Body of pancreas (tissue), 4 donors: ENCODE measurements at regions of chr2 and their contacts with region 1.

Region 1: GRCh38 chr2:207746131-207746530 is 23.6 kb downstream of the FZD5 start:
- DNase-seq: peak; percentile 56 to 70 (median 66)
- ATAC-seq: peak; percentile 78
- H3K4me3 ChIP-seq: no peak overlapping the region
- H3K27ac ChIP-seq: no peak overlapping the region
- H3K4me1 ChIP-seq: peaks cover 47% of the 10 kb centered on the region
- H3K27me3 ChIP-seq: no peaks in the 10 kb centered on the region
- CTCF ChIP-seq: peak; percentile 55 to 94 (median 88)
- POLR2A ChIP-seq: no peak

Region 2: DNA sequence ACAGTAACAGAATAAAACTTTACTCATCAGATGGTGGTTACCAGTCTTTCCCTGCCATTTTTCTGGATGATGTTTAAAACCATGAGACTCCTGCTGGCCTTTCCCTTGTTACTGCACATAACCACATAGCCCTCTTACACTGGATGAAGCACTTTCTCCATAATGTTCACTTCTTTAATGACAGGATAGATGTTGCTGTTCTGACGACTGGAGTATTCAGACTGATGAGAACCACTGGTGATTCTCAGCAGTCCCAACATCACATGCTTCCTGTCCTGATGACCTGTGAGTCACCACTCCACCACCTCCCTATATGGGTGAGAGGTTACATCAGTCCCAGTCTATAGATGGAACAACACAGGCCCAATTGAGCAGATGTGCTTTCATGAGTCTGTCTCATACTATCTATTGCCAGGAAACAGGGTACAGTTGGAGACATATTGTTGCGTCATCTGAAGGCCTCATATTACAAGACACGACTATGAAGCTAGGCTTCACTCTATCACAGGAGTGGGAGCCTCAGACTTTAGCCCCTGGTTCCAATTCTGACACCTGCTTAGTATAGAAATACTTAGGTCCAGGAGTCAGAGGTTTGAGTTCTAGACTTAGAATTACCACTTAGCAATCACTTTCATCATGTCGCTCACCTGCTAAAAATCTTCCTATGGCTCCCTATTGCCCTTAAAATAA is 434.7 kb before region 1 on chr2:
- intact Hi-C with region 1: no loop called
- DNase-seq: peak in 3 of 4 donors; percentile 9 to 72 (median 19)
- ATAC-seq: peak; percentile 55
- H3K4me3 ChIP-seq: no peak overlapping the region
- H3K27ac ChIP-seq: peak overlapping the region in 1 of 4 donors; percentile 45
- H3K4me1 ChIP-seq: no peaks in the 10 kb centered on the region
- H3K27me3 ChIP-seq: no peaks in the 10 kb centered on the region
- CTCF ChIP-seq: peak in 1 of 7 experiments; percentile 22
- POLR2A ChIP-seq: peak in 1 of 3 donors; percentile 24

Region 3: DNA sequence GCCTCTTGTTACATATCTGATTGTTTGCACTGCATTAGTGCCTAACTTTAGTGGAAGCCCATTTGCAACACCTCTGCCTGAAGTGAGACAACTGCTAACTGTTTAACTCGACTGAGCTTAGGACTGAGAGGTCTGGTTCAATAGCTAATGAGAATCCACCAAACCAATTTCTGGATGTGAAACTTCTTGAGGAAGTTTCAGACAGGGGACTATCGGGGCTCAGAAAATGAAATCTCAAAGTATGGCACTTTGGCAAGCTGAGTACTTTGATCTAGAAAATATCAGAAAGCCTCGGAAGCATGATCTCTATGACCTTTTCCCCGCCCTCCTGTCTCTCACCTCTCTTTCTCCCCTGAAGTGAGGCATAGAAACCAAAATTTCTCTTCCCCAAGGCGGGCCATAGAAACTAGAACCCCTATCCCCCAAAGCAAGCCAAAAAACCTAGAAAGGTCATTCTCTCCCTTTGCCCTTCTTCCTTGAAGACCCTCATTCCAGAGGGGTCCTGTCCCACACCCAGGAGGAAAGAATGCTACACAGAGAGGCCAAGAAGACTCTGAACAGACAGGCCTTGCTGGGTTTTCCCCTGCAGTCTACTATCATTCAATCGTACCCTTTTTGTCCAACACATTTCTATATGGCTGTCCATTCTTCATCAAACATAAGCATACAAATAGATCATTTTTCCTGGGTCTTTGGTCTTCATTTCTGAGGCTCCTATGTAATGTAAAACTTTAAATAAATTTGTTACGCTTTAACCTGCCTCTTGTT is 286.0 kb before region 1 on chr2:
- intact Hi-C with region 1: no loop called
- DNase-seq: no peak
- ATAC-seq: no peak
- H3K4me3 ChIP-seq: no peak overlapping the region
- H3K27ac ChIP-seq: no peak overlapping the region
- H3K4me1 ChIP-seq: no peaks in the 10 kb centered on the region
- H3K27me3 ChIP-seq: no peaks in the 10 kb centered on the region
- CTCF ChIP-seq: no peak
- POLR2A ChIP-seq: no peak

Region 4: DNA sequence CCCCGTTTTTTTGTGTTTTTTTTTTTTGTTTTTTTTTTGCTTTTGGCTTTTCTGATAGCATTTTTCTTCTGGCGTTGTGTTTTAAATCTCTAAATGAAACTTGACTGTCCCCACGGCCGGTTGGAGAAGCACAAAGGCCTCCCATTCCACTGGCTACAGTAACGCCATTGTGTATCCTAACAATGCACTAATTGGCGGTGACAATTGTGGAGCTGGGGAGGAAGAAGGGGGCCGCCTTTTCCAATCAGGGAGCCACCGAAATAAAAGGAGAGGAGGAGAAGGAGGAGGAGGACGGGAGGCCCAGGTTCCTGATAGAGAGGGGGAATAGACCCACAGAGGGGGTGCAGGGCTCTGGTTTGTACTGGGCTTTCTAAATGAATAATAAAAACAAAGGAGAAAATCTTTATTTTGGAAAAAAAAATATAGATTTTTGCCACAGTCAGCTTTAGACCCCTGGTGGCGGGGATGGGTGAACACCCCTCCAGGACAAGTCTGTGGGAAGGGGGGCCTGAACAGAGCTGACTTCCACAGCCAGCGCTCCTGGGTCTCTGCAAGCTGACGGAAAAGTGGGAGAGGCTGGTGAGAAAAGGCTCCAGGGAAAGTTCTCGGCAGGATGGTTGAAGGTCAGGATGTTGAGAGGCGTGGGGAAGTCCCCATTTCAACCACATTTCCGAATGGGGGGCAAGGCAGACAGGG is 67.2 kb after region 1 on chr2:
- intact Hi-C with region 1: no loop called
- DNase-seq: no peak
- ATAC-seq: no peak
- H3K4me3 ChIP-seq: no peak overlapping the region
- H3K27ac ChIP-seq: no peak overlapping the region
- H3K4me1 ChIP-seq: peaks cover 4% of the 10 kb centered on the region
- H3K27me3 ChIP-seq: no peaks in the 10 kb centered on the region
- CTCF ChIP-seq: no peak
- POLR2A ChIP-seq: no peak

Region 5: GRCh38 chr2:207975921-207976320 is 229.8 kb after region 1 on chr2:
- intact Hi-C with region 1: loop called (anchors 5 kb)
- DNase-seq: no peak
- ATAC-seq: no peak
- H3K4me3 ChIP-seq: no peak overlapping the region
- H3K27ac ChIP-seq: no peak overlapping the region
- H3K4me1 ChIP-seq: peaks cover 2% of the 10 kb centered on the region
- H3K27me3 ChIP-seq: no peaks in the 10 kb centered on the region
- CTCF ChIP-seq: no peak
- POLR2A ChIP-seq: no peak

Region 6: GRCh38 chr2:208033758-208034502 is 287.8 kb after region 1 on chr2:
- intact Hi-C with region 1: loop called (anchors 10 kb)
- DNase-seq: peak; percentile 43 to 68 (median 59)
- ATAC-seq: peak; percentile 83
- H3K4me3 ChIP-seq: no peak overlapping the region
- H3K27ac ChIP-seq: no peak overlapping the region
- H3K4me1 ChIP-seq: peaks cover 3% of the 10 kb centered on the region
- H3K27me3 ChIP-seq: no peaks in the 10 kb centered on the region
- CTCF ChIP-seq: peak in 5 of 7 experiments; percentile 22 to 55 (median 52)
- POLR2A ChIP-seq: no peak